CD4-positive, alpha-beta memory T cell (primary cell): ENCODE measurements at regions of chr1 and their contacts with region 1.

Region 1: GRCh38 chr1:174262349-174263241 is 103.3 kb downstream of the RABGAP1L start:
- DNase-seq: peak in 4 of 5 donors; percentile 15 to 24 (median 16)
- H3K4me3 ChIP-seq: no peak overlapping the region
- H3K4me3 Mint-ChIP-seq: no peak overlapping the region
- H3K27ac ChIP-seq: no peak overlapping the region
- H3K27ac Mint-ChIP-seq: peak overlapping the region in 1 of 7 donors; percentile 60
- H3K4me1 ChIP-seq: no peaks in the 10 kb centered on the region
- H3K4me1 Mint-ChIP-seq: no peaks in the 10 kb centered on the region
- H3K27me3 ChIP-seq: no peaks in the 10 kb centered on the region
- H3K27me3 Mint-ChIP-seq: no peaks in the 10 kb centered on the region

Region 2: GRCh38 chr1:174217787-174218574 is 44.6 kb before region 1 on chr1:
- CTCF ChIA-PET with region 1: no interaction called
- POLR2A ChIA-PET with region 1: no interaction called
- intact Hi-C with region 1: no loop called
- DNase-seq: peak in 4 of 5 donors; percentile 37 to 45 (median 40)
- H3K4me3 ChIP-seq: no peak overlapping the region
- H3K4me3 Mint-ChIP-seq: no peak overlapping the region
- H3K27ac ChIP-seq: no peak overlapping the region
- H3K27ac Mint-ChIP-seq: no peak overlapping the region
- H3K4me1 ChIP-seq: no peaks in the 10 kb centered on the region
- H3K4me1 Mint-ChIP-seq: peaks cover 0 to 5% (median 2%) of the 10 kb centered on the region in 4 donors
- H3K27me3 ChIP-seq: no peaks in the 10 kb centered on the region
- H3K27me3 Mint-ChIP-seq: no peaks in the 10 kb centered on the region

Region 3: GRCh38 chr1:174710868-174711845 is 448.6 kb after region 1 on chr1:
- CTCF ChIA-PET with region 1: no interaction called
- POLR2A ChIA-PET with region 1: no interaction called
- intact Hi-C with region 1: no loop called
- DNase-seq: no peak
- H3K4me3 ChIP-seq: no peak overlapping the region
- H3K4me3 Mint-ChIP-seq: no peak overlapping the region
- H3K27ac ChIP-seq: no peak overlapping the region
- H3K27ac Mint-ChIP-seq: no peak overlapping the region
- H3K4me1 ChIP-seq: no peaks in the 10 kb centered on the region
- H3K4me1 Mint-ChIP-seq: peaks cover 0 to 2% (median 0%) of the 10 kb centered on the region in 4 donors
- H3K27me3 ChIP-seq: no peaks in the 10 kb centered on the region
- H3K27me3 Mint-ChIP-seq: no peaks in the 10 kb centered on the region

Region 4: DNA sequence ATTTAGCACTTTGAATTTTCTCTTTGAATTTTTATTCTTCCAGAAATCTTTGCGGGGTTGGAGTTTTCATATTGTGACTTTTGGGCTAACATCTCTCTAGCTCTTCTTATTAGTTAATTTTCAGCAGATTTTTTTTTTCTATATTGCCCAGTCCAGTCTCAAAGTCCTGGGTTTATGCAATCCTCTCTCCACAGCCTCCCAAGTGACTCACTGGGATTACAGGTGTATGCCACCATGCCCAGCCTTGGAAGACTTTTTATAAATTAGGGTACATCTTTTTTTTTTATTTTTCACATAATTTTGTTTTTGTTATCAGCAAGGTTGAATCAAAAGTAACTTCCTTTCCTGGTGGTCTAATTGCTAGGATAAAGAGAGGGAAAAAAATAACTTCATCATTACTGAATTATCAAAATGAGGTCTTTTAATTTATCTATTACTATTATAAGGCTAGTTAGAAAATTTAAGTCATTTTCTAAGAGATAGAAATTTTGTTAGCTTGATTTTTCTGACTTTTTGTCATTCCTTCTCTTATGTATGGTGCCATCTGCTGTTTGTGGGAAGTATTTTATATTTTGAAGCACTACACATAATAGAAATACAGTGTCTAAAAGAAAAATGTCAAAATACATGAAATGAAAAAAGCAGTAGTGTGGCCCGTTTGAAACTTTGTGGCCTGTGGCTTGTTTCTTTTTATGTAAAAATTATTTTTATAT is 463.7 kb after region 1 on chr1:
- CTCF ChIA-PET with region 1: interaction called, 13 read pairs
- POLR2A ChIA-PET with region 1: no interaction called
- intact Hi-C with region 1: loop called (anchors 5 kb)
- DNase-seq: peak in 1 of 5 donors; percentile 3
- H3K4me3 ChIP-seq: no peak overlapping the region
- H3K4me3 Mint-ChIP-seq: no peak overlapping the region
- H3K27ac ChIP-seq: no peak overlapping the region
- H3K27ac Mint-ChIP-seq: peak overlapping the region in 1 of 7 donors; percentile 57
- H3K4me1 ChIP-seq: no peaks in the 10 kb centered on the region
- H3K4me1 Mint-ChIP-seq: peaks cover 0 to 5% (median 0%) of the 10 kb centered on the region in 4 donors
- H3K27me3 ChIP-seq: no peaks in the 10 kb centered on the region
- H3K27me3 Mint-ChIP-seq: no peaks in the 10 kb centered on the region

Region 5: DNA sequence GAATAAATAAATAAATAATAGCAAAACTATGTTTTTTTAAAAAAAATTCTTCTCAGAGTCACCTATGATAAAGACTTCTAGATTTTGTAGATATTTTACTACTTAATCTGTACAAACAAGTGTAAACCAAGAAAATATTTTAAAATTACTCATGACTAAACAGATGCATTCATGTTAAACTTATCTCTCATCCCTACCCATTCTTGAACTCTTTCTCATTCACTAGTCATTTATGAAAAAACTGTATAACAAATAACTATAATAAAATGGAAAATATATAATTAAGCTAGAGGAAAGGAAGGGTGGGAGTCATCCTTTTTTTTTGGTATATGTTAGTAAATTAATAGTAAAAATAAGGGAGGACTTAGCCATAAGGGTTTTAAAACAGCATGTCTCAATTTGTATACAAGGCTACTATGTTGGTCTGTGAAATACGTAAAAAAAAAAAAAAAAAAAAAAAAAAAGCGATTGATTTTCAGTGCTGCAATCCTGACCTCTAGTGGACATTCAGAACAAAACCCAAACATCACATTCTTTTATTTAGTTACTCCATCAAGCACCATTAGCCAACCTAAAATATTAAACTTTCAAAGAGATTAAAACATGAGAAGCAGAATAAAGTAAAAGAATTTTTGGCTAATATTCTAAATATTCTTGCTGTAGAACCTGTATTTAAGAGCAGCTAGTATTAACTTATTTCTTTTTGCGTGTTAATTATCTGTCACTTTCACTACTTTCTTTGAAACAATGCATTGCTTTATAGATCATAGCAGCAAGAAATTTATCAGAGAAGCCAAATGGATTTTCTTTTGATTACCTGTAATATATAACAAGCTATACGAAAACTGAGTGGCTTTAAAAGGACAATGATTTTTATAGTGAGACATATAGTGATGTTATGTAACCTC is 481.3 kb after region 1 on chr1:
- CTCF ChIA-PET with region 1: interaction called, 30 read pairs
- POLR2A ChIA-PET with region 1: no interaction called
- intact Hi-C with region 1: loop called (anchors 1 kb)
- DNase-seq: peak in 4 of 5 donors; percentile 42 to 47 (median 44)
- H3K4me3 ChIP-seq: no peak overlapping the region
- H3K4me3 Mint-ChIP-seq: no peak overlapping the region
- H3K27ac ChIP-seq: no peak overlapping the region
- H3K27ac Mint-ChIP-seq: peak overlapping the region in 2 of 7 donors; percentile 60
- H3K4me1 ChIP-seq: no peaks in the 10 kb centered on the region
- H3K4me1 Mint-ChIP-seq: peaks cover 0 to 7% (median 0%) of the 10 kb centered on the region in 4 donors
- H3K27me3 ChIP-seq: no peaks in the 10 kb centered on the region
- H3K27me3 Mint-ChIP-seq: no peaks in the 10 kb centered on the region

Region 6: DNA sequence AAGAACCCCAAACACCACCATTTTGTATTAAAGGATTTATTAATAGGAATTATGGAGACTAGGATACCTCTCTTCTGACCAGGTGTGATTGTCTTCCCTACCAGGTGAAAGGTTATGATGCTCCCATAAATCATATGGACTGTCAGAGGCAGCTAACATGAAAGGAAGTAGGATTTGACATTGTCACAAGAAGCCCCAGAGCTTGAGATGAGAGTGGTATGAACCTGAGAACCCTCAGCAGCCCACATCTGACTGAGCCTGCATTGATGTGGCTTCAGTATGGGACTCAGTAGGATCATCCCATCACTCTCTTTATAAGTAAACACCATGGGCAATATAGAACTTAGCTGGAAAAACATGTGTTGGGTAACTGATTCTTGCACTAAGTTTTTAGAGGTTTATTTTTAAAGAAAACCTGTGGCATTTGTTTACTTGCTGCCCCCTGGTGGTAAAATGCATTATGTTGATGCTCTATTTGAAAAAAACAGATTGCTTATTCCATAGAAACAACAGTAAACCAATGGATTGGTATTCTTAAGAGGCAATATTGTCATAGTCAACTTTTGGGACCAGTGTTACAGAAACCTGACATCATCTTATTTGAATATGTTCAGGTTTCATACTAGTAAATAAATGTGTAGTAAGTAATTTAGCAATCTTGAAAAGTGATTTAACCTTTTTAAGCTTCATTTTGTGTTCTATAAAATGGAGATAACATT is 720.5 kb after region 1 on chr1:
- CTCF ChIA-PET with region 1: no interaction called
- POLR2A ChIA-PET with region 1: no interaction called
- intact Hi-C with region 1: loop called (anchors 2 kb)
- DNase-seq: peak; percentile 59 to 70 (median 62)
- H3K4me3 ChIP-seq: no peak overlapping the region
- H3K4me3 Mint-ChIP-seq: no peak overlapping the region
- H3K27ac ChIP-seq: no peak overlapping the region
- H3K27ac Mint-ChIP-seq: peak overlapping the region in 5 of 7 donors; percentile 44 to 75 (median 59)
- H3K4me1 ChIP-seq: peaks cover 4% of the 10 kb centered on the region
- H3K4me1 Mint-ChIP-seq: peaks cover 13 to 28% (median 21%) of the 10 kb centered on the region in 4 donors
- H3K27me3 ChIP-seq: no peaks in the 10 kb centered on the region
- H3K27me3 Mint-ChIP-seq: no peaks in the 10 kb centered on the region